Heart left ventricle (tissue), 16 donors: ENCODE measurements at regions of chr6 and their contacts with region 1.

Region 1: DNA sequence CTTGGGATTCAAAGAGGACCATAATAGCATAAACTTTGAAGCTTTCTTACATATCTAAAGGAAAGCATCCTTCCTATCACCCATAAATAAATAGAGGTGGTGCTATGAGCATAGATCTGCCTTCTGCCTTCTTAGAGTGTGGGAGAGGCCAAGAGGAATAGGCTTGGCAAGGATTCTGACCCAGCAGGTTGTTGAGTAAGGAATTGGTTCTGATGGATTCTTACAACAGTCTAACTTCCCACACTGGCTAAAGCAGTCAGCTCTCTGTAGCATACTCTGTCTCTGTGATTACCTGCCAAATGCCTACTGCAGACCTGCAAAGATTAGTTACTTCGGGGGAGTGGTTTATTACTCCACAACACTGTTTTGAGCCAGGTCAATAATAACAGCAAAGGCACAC is 198.0 kb upstream of the RAB32 start:
- DNase-seq: no peak
- ATAC-seq: no peak
- H3K4me3 ChIP-seq: no peak overlapping the region
- H3K27ac ChIP-seq: no peak overlapping the region
- H3K4me1 ChIP-seq: peaks cover 0 to 16% (median 0%) of the 10 kb centered on the region in 12 donors
- H3K27me3 ChIP-seq: no peaks in the 10 kb centered on the region
- CTCF ChIP-seq: no peak
- POLR2A ChIP-seq: no peak

Region 2: GRCh38 chr6:146277142-146277541 is 68.5 kb before region 1 on chr6:
- intact Hi-C with region 1: loop called in 1 of 10 experiments (anchors 5 kb)
- DNase-seq: no peak
- ATAC-seq: no peak
- H3K4me3 ChIP-seq: no peak overlapping the region
- H3K27ac ChIP-seq: no peak overlapping the region
- H3K4me1 ChIP-seq: peaks cover 0 to 15% (median 0%) of the 10 kb centered on the region in 12 donors
- H3K27me3 ChIP-seq: no peaks in the 10 kb centered on the region
- CTCF ChIP-seq: no peak
- POLR2A ChIP-seq: no peak